WTC11 (cell line): ENCODE measurements at regions of chr13 and their contacts with region 1.

Region 1: DNA sequence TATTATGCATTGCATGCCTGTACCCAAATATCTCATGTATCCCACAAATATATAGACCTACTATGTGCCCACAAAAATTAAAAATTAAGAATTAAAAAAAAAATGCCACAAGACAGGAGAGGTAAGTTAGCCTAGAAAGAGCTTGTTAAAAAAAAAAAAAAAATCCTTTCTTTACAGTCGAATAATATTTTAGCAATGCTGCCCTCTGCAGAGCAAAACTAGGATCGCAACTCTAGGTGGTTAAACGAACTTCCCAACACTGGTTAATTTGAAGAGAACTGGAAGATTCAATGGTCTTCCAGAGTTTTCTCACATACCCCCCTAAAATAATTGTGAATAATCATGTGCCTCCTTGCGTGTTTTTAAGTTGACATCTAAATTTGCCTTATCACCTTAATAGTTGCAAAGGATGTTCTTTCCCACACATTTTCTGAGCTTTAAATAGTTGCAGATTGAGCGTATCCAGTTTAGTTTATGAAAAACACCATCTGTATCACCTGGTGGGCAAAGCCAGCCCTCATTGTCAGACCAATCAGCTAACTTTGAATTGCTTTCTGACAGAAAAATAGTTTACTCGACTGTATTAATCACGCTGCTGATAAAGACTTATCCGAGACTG is 47.4 kb upstream of the RCBTB2 start:
- DNase-seq: peak; percentile 71
- ATAC-seq: peak; percentile 53
- H3K4me3 Mint-ChIP-seq: no peak overlapping the region
- H3K27ac Mint-ChIP-seq: no peak overlapping the region
- H3K4me1 Mint-ChIP-seq: peaks cover 5% of the 10 kb centered on the region
- H3K27me3 Mint-ChIP-seq: no peaks in the 10 kb centered on the region
- CTCF ChIP-seq: peak; percentile 55; the same call in 1 of the 2 replicates

Region 2: DNA sequence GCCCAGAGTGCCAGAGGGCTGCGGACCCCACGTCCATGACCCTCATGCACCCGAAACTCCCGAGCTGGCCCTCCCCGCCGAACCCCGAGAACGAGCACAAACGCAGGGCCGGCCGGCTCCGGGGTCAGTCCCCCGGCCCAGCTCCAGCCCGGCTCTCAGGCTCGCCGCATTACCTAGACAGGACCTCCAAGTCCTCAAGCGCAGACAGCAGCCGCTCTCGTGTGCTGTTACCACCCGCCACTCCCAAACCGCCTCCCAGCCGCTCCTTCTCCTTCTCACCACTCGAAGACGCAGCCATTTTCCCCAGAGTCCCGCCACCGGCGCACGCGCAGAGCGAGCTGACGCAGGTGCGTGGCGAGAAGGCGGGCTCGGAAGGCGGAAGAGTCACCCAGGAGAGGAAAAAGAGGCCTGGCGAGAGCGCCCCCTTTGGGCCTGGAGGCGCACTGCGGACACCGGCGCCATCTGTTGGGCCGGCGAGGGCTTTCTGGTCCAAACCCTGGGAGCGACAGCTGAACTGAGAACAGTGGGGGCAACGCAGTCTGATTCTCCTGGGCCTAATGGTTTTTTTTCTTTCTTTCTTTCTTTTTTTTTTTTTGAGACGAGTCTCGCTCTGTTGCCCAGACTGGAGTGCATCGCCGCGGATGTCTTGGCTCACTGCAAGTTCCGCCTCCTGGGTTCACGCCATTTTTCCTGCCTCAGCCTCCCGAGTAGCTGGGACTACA is 485.4 kb before region 1 on chr13 and contains the start of gene MED4:
- CTCF ChIA-PET with region 1: interaction called, 10 read pairs
- POLR2A ChIA-PET with region 1: no interaction called
- DNase-seq: peak; percentile 97
- ATAC-seq: peak; percentile 94
- H3K4me3 Mint-ChIP-seq: peak within 1 kb of the TSS; percentile 95
- H3K27ac Mint-ChIP-seq: peak within 1 kb of the TSS; percentile 90
- H3K4me1 Mint-ChIP-seq: peaks cover 25% of the 10 kb centered on the region; the same call in 1 of the 2 replicates
- H3K27me3 Mint-ChIP-seq: peaks cover 5% of the 10 kb centered on the region; the same call in 1 of the 2 replicates
- CTCF ChIP-seq: peak; percentile 98
- total RNA-seq, gene MED4: 36.9 to 48.1 TPM (median 43.2 TPM) in 3 replicates

Region 3: GRCh38 chr13:48334534-48335127 is 245.7 kb before region 1 on chr13:
- CTCF ChIA-PET with region 1: interaction called, 39 read pairs
- POLR2A ChIA-PET with region 1: interaction called, 3 read pairs
- DNase-seq: no peak
- ATAC-seq: no peak; the same call in 1 of the 2 replicates
- H3K4me3 Mint-ChIP-seq: no peak overlapping the region
- H3K27ac Mint-ChIP-seq: no peak overlapping the region
- H3K4me1 Mint-ChIP-seq: no peaks in the 10 kb centered on the region
- H3K27me3 Mint-ChIP-seq: no peaks in the 10 kb centered on the region
- CTCF ChIP-seq: no peak

Region 4: GRCh38 chr13:48505012-48505411 is 75.3 kb before region 1 on chr13:
- CTCF ChIA-PET with region 1: interaction called, 10 read pairs
- POLR2A ChIA-PET with region 1: no interaction called
- DNase-seq: no peak
- ATAC-seq: peak; percentile 73
- H3K4me3 Mint-ChIP-seq: no peak overlapping the region
- H3K27ac Mint-ChIP-seq: peak overlapping the region; percentile 64
- H3K4me1 Mint-ChIP-seq: peaks cover 18% of the 10 kb centered on the region
- H3K27me3 Mint-ChIP-seq: no peaks in the 10 kb centered on the region
- CTCF ChIP-seq: no peak

Region 5: DNA sequence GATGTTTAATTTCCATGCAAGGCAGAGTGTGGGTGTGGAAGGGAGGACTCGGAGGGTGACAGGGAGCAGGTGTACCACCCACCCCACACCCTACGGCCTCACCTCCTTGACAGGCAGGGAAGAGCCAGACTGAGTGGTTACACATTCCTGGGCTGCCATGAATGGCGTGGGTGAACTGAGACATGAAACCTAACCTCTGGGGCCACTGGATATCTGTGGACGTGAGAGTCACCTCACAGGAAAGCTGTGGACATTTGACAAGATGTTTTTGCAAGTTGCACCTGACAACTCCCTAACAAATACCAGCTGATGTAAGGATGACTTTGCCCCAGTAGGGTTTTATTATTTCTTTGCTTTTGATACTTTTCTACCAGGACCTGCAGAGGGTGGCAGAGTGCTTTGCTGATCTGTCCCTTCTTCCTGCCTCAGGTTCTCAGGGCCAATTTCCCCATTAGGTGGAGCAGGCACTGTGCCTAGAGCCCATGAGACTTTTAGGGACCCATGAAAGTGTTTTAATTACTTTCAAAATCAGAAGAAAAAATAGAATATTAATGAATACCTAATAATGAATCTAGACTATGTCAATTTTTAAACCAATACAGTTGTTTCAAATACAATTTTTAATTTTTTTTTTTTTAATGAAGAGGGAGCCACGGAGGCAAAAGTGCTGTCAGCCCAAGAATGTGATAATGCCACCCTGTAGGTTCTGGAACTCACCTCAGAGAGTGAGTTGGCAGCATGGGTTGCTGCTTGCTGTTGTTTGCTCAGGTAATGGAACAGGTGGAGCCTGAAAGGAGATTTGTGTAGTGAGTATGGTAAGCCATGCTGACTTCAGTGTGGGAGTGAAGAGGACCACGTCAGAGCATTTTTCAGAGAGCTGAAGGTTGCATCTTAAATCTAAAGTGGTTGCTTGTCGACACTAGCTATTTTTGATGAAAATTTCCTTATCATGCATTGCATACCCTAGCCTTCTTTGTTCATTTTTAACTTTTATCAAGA is 15.4 kb after region 1 on chr13:
- CTCF ChIA-PET with region 1: interaction called, 10 read pairs
- POLR2A ChIA-PET with region 1: interaction called, 4 read pairs
- DNase-seq: peak; percentile 32
- ATAC-seq: peak; percentile 79
- H3K4me3 Mint-ChIP-seq: no peak overlapping the region
- H3K27ac Mint-ChIP-seq: no peak overlapping the region
- H3K4me1 Mint-ChIP-seq: peaks cover 53% of the 10 kb centered on the region
- H3K27me3 Mint-ChIP-seq: peaks cover 2% of the 10 kb centered on the region; the same call in 1 of the 2 replicates
- CTCF ChIP-seq: no peak